ENCODE measurements at regions of chr3 and their contacts with region 1.

Region 1: GRCh38 chr3:197466586-197467399 is 89.0 kb downstream of the BDH1 start:
- DNase-seq: no peak
- H3K4me3 ChIP-seq: peak overlapping the region; percentile 33
- CTCF ChIP-seq: no peak

Region 2: GRCh38 chr3:197456261-197457091 is 10.3 kb before region 1 on chr3:
- CTCF ChIA-PET with region 1: interaction called, 10 read pairs
- POLR2A ChIA-PET with region 1: interaction called, 3 read pairs
- DNase-seq: no peak
- H3K4me3 ChIP-seq: peak overlapping the region; percentile 53
- CTCF ChIP-seq: no peak

Region 3: DNA sequence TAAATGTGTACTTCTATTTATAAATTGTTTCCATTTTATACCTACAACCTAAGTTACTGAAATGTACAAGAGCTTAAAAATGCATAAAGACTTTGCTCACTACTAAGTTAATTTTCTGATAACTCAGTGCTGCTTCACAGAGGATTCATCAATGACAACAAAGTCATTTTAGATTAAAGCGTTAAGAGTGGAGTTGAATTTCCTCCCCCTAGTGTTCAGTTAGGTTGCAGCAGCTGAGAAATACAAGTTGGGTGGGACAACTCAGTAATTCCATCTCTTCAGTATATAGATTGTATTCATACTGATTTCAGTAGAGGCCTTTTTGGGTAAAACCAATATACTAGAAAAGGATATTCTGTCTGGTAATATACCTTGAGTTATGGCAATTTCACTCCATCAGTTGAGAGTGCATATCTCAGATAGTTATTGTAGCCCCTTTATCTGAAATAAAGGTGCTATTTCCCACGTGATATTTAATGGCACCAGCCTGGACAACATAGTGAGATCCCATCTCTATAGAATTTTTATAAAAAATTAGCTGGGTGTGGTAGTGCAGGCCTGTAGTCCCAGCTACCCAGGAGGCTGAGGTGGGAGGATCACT is 476.3 kb after region 1 on chr3:
- CTCF ChIA-PET with region 1: no interaction called
- POLR2A ChIA-PET with region 1: no interaction called
- DNase-seq: no peak
- H3K4me3 ChIP-seq: no peak overlapping the region
- CTCF ChIP-seq: peak; percentile 75